Heart right ventricle (tissue), 16 donors: ENCODE measurements at regions of chr17 and their contacts with region 1.

Region 1: GRCh38 chr17:534071-534691 is 180.5 kb downstream of the VPS53 start:
- DNase-seq: peak in 1 of 2 donors; percentile 26
- ATAC-seq: peak; percentile 50 to 76 (median 74)
- H3K4me3 ChIP-seq: no peak overlapping the region
- H3K27ac ChIP-seq: peak overlapping the region in 9 of 10 donors; percentile 17 to 81 (median 51)
- H3K4me1 ChIP-seq: peaks cover 0 to 44% (median 24%) of the 10 kb centered on the region in 9 donors
- H3K27me3 ChIP-seq: no peaks in the 10 kb centered on the region
- CTCF ChIP-seq: no peak

Region 2: GRCh38 chr17:559551-560431 is 25.6 kb after region 1 on chr17:
- intact Hi-C with region 1: no loop called
- DNase-seq: peak; percentile 23 to 46
- ATAC-seq: peak; percentile 49 to 92 (median 84)
- H3K4me3 ChIP-seq: no peak overlapping the region
- H3K27ac ChIP-seq: peak overlapping the region; percentile 58 to 92 (median 82)
- H3K4me1 ChIP-seq: peaks cover 11 to 68% (median 45%) of the 10 kb centered on the region in 9 donors
- H3K27me3 ChIP-seq: no peaks in the 10 kb centered on the region
- CTCF ChIP-seq: no peak

Region 3: GRCh38 chr17:606508-607250 is 72.5 kb after region 1 on chr17:
- intact Hi-C with region 1: no loop called
- DNase-seq: no peak
- ATAC-seq: no peak
- H3K4me3 ChIP-seq: no peak overlapping the region
- H3K27ac ChIP-seq: no peak overlapping the region
- H3K4me1 ChIP-seq: peaks cover 0 to 34% (median 0%) of the 10 kb centered on the region in 9 donors
- H3K27me3 ChIP-seq: no peaks in the 10 kb centered on the region
- CTCF ChIP-seq: no peak

Region 4: DNA sequence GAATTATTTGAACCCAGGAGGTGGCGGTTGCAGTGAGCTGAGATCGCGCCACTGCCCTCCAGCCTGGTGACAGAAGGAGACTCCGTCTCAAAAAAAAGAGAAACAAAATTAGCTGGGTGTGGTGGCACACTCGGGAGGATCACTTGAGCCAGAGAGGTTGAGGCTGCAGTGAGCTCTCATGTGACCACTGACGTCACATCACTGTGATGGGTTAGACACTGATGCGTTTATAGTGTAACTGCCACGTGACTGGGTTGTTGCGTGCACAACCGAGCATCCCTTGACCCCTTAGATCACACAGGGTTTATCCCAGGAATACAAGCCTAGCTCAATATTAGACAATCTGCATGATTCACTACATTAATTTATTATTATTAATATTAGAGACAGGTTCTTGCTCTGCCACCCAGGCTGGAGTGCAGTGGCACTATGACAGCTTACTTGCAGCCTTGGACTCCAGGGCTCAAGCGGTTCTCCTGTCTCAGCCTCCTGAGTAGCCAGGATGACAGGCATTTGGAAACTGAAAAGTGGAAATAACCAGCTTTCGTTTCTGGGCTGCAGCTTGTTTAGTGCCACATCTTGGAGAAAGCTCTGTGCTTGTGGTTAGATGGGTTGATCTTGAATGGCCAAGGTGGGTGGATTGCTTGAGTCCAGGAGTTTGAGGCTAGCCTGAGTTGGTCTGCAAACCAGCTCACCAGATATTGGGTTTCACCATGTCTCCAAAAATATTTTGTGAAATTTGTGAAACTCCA is 672.0 kb after region 1 on chr17:
- intact Hi-C with region 1: loop called in 1 of 10 experiments (anchors 5 kb)
- DNase-seq: no peak
- ATAC-seq: no peak
- H3K4me3 ChIP-seq: no peak overlapping the region
- H3K27ac ChIP-seq: peak overlapping the region in 1 of 10 donors; percentile 81
- H3K4me1 ChIP-seq: peaks cover 0 to 52% (median 6%) of the 10 kb centered on the region in 9 donors
- H3K27me3 ChIP-seq: peaks cover 0 to 6% (median 0%) of the 10 kb centered on the region in 7 donors
- CTCF ChIP-seq: no peak